ENCODE measurements at regions of chr6 and their contacts with region 1.

Region 1: GRCh38 chr6:108888745-108889144 is 40.5 kb downstream of the ARMC2 start:
- DNase-seq: no peak
- ATAC-seq: peak in 4 of 8 donors; percentile 13 to 62 (median 40)
- H3K4me3 ChIP-seq: no peak overlapping the region
- H3K27ac ChIP-seq: peak overlapping the region in 1 of 10 donors; percentile 49
- H3K4me1 ChIP-seq: peaks cover 0 to 23% (median 5%) of the 10 kb centered on the region in 9 donors
- H3K27me3 ChIP-seq: no peaks in the 10 kb centered on the region
- CTCF ChIP-seq: no peak

Region 2: DNA sequence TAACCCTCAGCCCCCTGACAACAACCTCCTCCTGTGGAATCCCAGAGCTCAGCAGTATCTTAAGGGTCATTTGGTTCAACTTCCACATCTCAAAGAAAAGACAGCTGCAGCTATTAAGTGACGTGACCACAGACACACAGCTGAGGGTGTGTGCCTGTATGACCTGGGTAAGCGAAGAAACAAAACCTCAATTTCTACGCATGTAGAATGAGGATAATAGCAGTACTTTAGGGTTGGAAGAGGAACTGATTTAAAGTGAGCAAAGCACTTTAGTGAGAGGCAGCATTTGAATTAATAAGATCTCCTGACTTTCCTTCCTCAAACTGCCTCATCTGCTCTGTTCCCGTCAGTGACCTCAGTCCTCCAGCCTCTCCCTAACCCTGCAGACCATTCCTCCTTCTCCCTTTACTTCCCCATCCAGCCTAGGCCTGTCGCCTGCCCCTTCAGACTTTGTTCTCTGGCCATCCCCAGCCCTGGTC is 47.3 kb before region 1 on chr6:
- intact Hi-C with region 1: loop called in 6 of 10 experiments (anchors 5 to 10 kb)
- DNase-seq: peak in 1 of 2 donors; percentile 18
- ATAC-seq: peak in 7 of 8 donors; percentile 61 to 84 (median 77)
- H3K4me3 ChIP-seq: no peak overlapping the region
- H3K27ac ChIP-seq: peak overlapping the region in 3 of 10 donors; percentile 45 to 89 (median 54)
- H3K4me1 ChIP-seq: peaks cover 0 to 39% (median 0%) of the 10 kb centered on the region in 9 donors
- H3K27me3 ChIP-seq: no peaks in the 10 kb centered on the region
- CTCF ChIP-seq: no peak

Measured in heart right ventricle (tissue), 16 donors.